Right lobe of liver (tissue), 6 donors: ENCODE measurements at regions of chr9 and their contacts with region 1.

Region 1: GRCh38 chr9:109072128-109072692 is 47.5 kb downstream of the TMEM245 start:
- DNase-seq: no peak
- ATAC-seq: no peak
- H3K4me3 ChIP-seq: no peak overlapping the region
- H3K27ac ChIP-seq: no peak overlapping the region
- H3K4me1 ChIP-seq: no peaks in the 10 kb centered on the region
- H3K27me3 ChIP-seq: no peaks in the 10 kb centered on the region
- CTCF ChIP-seq: no peak
- POLR2A ChIP-seq: no peak

Region 2: DNA sequence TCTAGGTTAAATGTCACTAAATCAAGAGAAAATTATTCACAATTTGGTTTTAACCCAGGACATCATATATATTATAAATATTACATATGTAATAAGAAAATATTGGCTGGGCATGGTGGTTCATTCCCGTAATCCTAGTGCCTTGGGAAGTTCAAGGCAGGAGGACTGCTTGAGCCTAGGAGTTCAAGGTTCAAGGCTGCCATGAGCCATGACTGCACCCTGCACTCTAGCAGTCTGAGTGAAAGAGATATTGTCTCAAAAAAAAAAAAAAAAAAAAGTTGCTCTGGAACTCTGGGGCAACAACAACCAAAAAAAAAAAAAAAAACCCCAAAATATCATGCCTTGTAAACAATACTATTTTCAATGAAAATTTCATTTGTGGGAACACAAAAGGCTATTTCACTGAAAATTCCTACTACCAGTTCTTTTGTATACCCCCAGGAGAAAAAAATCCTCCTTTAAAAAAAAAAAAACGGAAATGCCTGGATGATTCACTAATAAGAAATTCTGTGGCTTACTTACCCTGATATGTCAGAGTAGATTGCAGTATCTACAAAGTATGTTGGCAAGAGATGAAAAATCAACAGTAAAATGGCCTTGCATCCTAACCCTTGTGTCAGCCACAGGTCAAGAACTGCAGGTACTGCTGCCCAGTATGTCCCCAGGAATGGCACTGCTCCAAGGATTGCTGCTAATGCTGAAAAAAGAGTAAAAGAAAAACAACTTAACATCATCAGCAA is 36.4 kb before region 1 on chr9:
- intact Hi-C with region 1: loop called in 1 of 2 experiments (anchors 5 kb)
- DNase-seq: peak; percentile 77 to 88 (median 77)
- ATAC-seq: peak; percentile 96 to 99 (median 98)
- H3K4me3 ChIP-seq: no peak overlapping the region
- H3K27ac ChIP-seq: peak overlapping the region; percentile 5 to 68 (median 38)
- H3K4me1 ChIP-seq: peaks cover 0 to 18% (median 9%) of the 10 kb centered on the region in 4 donors
- H3K27me3 ChIP-seq: no peaks in the 10 kb centered on the region
- CTCF ChIP-seq: no peak
- POLR2A ChIP-seq: no peak

Region 3: DNA sequence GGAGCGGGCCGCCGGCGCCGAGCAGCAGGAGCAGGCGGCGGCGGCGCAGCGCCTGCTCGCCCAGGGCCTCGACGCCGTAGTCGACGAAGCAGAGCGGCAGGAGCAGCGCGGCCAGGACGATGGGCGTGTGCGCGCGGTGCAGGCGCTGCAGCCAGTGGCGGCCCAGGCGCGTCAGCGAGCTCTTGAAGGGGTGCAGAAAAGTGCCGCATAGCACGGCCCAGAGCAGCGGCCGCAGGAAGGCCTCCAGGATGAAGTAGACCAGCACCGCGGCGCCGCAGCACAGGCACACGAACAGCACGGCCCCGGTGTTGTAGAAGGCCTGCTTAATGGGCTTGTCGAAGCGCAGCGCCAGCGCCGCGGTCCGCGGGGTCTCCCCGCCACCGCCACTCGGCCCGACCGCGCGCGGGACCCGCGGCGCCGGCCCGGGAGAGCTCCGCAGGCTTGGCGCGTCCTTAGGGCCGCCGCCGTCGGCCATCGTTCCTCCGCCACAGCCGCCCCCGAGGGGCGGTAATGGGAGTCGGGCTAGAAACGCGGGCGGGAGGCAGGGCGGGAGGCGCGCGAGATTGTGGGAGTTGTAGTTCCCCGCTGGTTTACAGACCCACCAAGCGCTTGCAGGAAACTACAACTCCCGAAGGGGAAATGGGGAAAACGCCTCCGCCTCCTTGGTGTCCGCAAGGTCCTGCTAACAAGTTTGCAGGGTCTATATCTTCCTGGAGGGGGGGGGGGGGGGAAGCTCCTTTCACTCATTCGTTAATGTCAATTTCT is 47.4 kb after region 1 on chr9 and contains the start of gene TMEM245:
- intact Hi-C with region 1: no loop called
- DNase-seq: peak; percentile 95 to 98 (median 98)
- ATAC-seq: peak; percentile 86 to 98 (median 91)
- H3K4me3 ChIP-seq: peak within 1 kb of the TSS; percentile 48 to 88 (median 70)
- H3K27ac ChIP-seq: peak within 1 kb of the TSS; percentile 89 to 98 (median 93)
- H3K4me1 ChIP-seq: peaks cover 0 to 35% (median 18%) of the 10 kb centered on the region in 4 donors
- H3K27me3 ChIP-seq: no peaks in the 10 kb centered on the region
- CTCF ChIP-seq: no peak
- POLR2A ChIP-seq: peak; percentile 95
- total RNA-seq, gene TMEM245: 24.7 to 39.5 (median 36.8) TPM

Region 4: GRCh38 chr9:109264877-109265587 is 192.8 kb after region 1 on chr9:
- intact Hi-C with region 1: no loop called
- DNase-seq: peak in 1 of 3 donors; percentile 37
- ATAC-seq: peak; percentile 52 to 72 (median 68)
- H3K4me3 ChIP-seq: no peak overlapping the region
- H3K27ac ChIP-seq: no peak overlapping the region
- H3K4me1 ChIP-seq: peaks cover 0 to 13% (median 0%) of the 10 kb centered on the region in 4 donors
- H3K27me3 ChIP-seq: no peaks in the 10 kb centered on the region
- CTCF ChIP-seq: no peak
- POLR2A ChIP-seq: no peak